Heart left ventricle (tissue), 16 donors: ENCODE measurements at regions of chr15 and their contacts with region 1.

Region 1: DNA sequence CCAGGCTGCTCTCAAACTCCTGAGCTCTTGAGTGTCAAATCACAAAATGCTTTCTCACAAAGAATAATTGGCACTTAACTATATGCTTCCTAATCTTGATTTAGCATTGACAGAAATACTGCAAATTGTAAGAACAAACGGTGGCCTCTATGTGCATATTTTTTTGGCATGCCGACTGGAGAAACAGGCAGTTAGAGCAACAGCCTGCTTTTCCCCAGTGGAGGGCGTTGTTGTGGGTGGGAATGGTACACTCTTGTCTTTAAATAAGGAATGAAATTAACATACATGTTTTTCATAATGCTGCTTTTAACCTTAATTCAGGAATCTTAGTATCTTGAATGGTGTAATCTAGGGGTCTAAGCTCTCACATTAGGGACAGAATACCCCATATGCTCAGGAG is 31.1 kb upstream of the SV2B start:
- DNase-seq: no peak
- ATAC-seq: no peak
- H3K4me3 ChIP-seq: no peak overlapping the region
- H3K27ac ChIP-seq: no peak overlapping the region
- H3K4me1 ChIP-seq: no peaks in the 10 kb centered on the region
- H3K27me3 ChIP-seq: peaks cover 0 to 9% (median 0%) of the 10 kb centered on the region in 9 donors
- CTCF ChIP-seq: no peak
- POLR2A ChIP-seq: no peak

Region 2: GRCh38 chr15:90306560-90306959 is 762.4 kb before region 1 on chr15:
- intact Hi-C with region 1: no loop called
- DNase-seq: no peak
- ATAC-seq: no peak
- H3K4me3 ChIP-seq: no peak overlapping the region
- H3K27ac ChIP-seq: peak overlapping the region in 2 of 12 donors; percentile 13 to 17
- H3K4me1 ChIP-seq: peaks cover 0 to 18% (median 4%) of the 10 kb centered on the region in 12 donors
- H3K27me3 ChIP-seq: no peaks in the 10 kb centered on the region
- CTCF ChIP-seq: no peak
- POLR2A ChIP-seq: no peak

Region 3: DNA sequence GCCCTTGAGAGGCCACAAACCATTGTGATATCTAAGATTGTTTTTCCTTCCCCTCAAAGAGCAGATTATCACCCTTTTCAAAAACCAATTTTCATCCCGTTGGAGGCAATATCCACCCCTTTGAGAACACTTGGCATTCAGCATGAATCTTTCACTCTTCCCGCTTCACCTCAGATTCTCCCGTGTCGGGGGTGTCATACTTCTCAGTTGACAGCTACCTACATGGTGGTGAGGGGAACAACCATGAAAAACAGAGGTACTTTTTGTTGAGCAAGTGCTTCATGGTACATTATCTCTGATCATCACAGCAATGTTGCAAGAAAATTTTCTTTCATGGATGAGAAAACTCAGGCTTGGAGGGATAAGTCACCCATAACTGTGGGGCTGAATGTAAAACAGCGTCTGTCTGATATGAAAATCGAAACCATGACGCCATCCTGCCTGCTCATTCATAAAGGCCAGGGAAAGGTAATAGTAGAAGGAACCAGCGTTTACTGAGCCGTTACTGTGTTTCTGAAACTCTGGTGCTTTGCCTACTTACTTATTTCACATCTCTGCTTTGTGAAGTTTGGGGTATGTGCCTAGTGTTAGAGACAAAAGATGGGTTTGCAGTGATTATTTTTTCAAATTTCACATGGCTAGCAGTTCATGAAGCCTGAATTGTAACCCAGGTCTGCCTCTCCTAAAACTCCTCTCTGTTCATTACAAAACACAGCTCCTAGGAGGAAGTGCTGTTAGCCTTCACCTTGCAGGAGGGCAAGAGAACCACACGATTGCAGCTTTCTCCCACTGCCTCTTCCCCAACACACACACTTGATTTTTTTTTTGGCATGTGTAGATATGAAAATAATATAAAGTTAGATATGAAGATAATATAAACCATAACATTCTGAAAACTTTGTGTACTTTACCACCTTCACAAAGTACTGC is 66.5 kb after region 1 on chr15:
- intact Hi-C with region 1: loop called in 1 of 10 experiments (anchors 5 kb)
- DNase-seq: no peak
- ATAC-seq: no peak
- H3K4me3 ChIP-seq: no peak overlapping the region
- H3K27ac ChIP-seq: no peak overlapping the region
- H3K4me1 ChIP-seq: no peaks in the 10 kb centered on the region
- H3K27me3 ChIP-seq: peaks cover 0 to 3% (median 0%) of the 10 kb centered on the region in 9 donors
- CTCF ChIP-seq: no peak
- POLR2A ChIP-seq: no peak